PC-9 (cell line): ENCODE measurements at regions of chr2 and their contacts with region 1.

Region 1: DNA sequence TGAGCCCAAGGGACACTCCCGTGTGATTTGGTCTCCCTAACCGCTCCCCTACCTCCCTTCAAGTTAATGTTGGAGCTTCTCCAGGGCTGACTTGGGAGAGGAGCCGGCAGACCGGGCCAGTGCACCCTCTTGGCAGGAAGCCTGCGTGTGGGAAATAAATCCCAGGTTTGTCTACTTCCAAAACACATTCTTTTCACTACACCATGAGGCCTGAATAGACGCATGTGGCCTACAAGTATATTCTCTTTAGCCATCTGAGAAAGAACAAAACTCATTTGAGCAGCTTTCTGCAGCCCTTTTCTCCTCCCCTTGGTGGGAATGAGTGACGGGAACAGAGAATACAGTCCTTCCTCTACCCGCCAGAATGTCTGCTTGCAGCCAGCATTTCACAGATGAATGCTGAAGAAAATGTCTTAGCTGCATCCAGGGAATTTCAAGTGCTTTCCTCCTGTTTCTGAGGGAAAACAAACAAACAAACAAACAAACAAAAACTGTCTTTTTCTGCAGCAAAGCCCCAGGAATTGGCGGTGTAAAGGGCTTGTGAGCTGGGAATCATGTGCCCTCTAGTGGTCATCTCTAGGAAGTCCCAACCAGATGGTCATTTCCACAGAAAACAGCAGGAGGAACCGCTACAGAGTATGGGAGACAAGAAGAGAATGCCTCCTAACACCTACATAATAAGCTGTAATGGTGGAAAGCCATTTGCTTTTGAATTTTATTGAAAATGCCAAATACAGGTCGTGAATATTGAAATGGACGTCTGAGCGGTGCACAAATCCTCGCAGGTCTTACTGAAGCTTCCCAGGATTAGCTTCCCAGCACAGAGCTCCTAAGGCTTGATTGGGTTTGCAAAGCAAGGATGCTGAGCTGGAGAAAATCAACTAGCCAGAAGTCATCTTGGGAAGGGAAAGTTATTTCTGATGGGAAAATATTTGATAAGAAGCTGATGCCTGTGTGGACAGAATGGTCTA is 41.2 kb upstream of the DAPL1 start:
- DNase-seq: peak in 1 of 2 experiments; percentile 20
- H3K4me3 ChIP-seq: no peak overlapping the region
- H3K27ac ChIP-seq: no peak overlapping the region
- H3K4me1 ChIP-seq: no peaks in the 10 kb centered on the region
- H3K27me3 ChIP-seq: no peaks in the 10 kb centered on the region
- CTCF ChIP-seq: peak; percentile 88

Region 2: GRCh38 chr2:157492189-157492773 is 1261.6 kb before region 1 on chr2:
- CTCF ChIA-PET with region 1: no interaction called
- POLR2A ChIA-PET with region 1: no interaction called
- intact Hi-C with region 1: loop called (anchors 5 kb)
- DNase-seq: peak in 1 of 2 experiments; percentile 41
- H3K4me3 ChIP-seq: no peak overlapping the region
- H3K27ac ChIP-seq: no peak overlapping the region
- H3K4me1 ChIP-seq: no peaks in the 10 kb centered on the region
- H3K27me3 ChIP-seq: no peaks in the 10 kb centered on the region
- CTCF ChIP-seq: peak; percentile 68

Region 3: GRCh38 chr2:158034199-158034866 is 719.6 kb before region 1 on chr2:
- CTCF ChIA-PET with region 1: no interaction called
- POLR2A ChIA-PET with region 1: no interaction called
- intact Hi-C with region 1: loop called (anchors 2 kb)
- DNase-seq: peak in 1 of 2 experiments; percentile 27
- H3K4me3 ChIP-seq: no peak overlapping the region
- H3K27ac ChIP-seq: no peak overlapping the region
- H3K4me1 ChIP-seq: no peaks in the 10 kb centered on the region
- H3K27me3 ChIP-seq: no peaks in the 10 kb centered on the region
- CTCF ChIP-seq: peak; percentile 44

Region 4: DNA sequence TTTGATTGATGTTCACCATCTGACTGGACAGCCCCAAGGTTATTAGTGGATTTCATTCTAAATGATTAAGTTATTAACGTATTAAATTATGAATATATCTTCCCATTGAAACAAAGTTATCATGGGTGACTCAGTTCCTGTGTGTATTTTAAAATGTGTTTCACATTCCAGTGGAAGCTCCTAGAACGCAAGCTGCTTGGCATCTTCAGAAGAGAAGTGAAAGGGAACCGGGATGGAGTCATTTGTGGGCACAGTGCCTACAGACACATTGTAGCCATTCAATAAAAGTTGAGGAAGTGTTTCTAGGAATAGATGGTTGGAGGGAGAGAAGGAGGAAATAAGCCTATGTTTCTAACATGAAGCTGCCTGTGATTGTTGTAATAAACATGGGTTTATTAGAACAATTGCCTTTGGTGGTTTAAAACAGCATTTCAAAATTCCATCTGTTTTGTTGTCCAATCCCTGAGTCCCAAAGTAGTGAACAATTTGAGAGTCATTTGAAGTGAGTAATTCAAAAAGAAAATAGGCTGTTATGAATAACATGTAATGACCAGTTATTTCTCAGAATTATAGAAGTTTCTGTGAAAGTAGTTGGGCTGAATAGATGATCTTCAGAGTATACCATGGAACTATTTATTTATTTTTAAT is 153.6 kb before region 1 on chr2:
- CTCF ChIA-PET with region 1: no interaction called
- POLR2A ChIA-PET with region 1: no interaction called
- intact Hi-C with region 1: no loop called
- DNase-seq: peak; percentile 34 to 35
- H3K4me3 ChIP-seq: no peak overlapping the region
- H3K27ac ChIP-seq: no peak overlapping the region
- H3K4me1 ChIP-seq: no peaks in the 10 kb centered on the region
- H3K27me3 ChIP-seq: no peaks in the 10 kb centered on the region
- CTCF ChIP-seq: no peak

Region 5: DNA sequence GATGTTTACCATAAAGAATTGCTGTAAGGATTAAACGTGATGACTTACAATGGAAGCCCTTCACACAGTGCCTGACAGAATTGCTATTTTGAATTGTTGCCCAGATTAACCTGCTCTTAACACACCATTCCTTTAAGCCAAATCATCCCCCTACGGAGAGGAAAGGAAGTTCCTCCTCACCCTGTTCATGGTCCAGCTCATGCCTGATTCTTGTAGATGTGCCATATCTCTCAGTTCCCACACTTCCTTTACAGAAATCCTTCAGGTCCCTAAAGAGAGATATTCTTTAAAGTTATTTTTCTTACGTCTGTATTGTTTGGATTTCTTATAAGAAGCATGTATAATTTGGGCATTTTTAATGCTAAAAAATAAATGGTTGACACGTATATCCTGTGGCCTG is 86.3 kb before region 1 on chr2:
- CTCF ChIA-PET with region 1: no interaction called
- POLR2A ChIA-PET with region 1: no interaction called
- intact Hi-C with region 1: loop called (anchors 5 kb)
- DNase-seq: no peak
- H3K4me3 ChIP-seq: no peak overlapping the region
- H3K27ac ChIP-seq: no peak overlapping the region
- H3K4me1 ChIP-seq: no peaks in the 10 kb centered on the region
- H3K27me3 ChIP-seq: no peaks in the 10 kb centered on the region
- CTCF ChIP-seq: no peak